Activated T-helper 1 cell treated with anti-CD3 and anti-CD28 coated beads, Interleukin-12 subunit alpha, Interleukin-12 subunit beta, Interleukin-2, Interleukin-4 antibody, amounts not matched to agents 30 ng/mL and 10 ng/mL and 1 ng/mL, durations not matched to agents 14 hours and 24 hours and 36 hours (primary cell): ENCODE measurements at regions of chr2 and their contacts with region 1.

Region 1: GRCh38 chr2:174835797-174836255 is 71.6 kb upstream of the CHRNA1 start:
- DNase-seq: no peak
- H3K4me3 Mint-ChIP-seq: peak overlapping the region; percentile 43
- H3K27ac Mint-ChIP-seq: peak overlapping the region; percentile 96
- H3K4me1 Mint-ChIP-seq: peaks cover 40% of the 10 kb centered on the region
- H3K27me3 Mint-ChIP-seq: no peaks in the 10 kb centered on the region

Region 2: GRCh38 chr2:174593574-174594203 is 242.1 kb before region 1 on chr2:
- intact Hi-C with region 1: loop called (anchors 5 kb)
- DNase-seq: peak; percentile 69
- H3K4me3 Mint-ChIP-seq: peak overlapping the region; percentile 86
- H3K27ac Mint-ChIP-seq: peak overlapping the region; percentile 98
- H3K4me1 Mint-ChIP-seq: peaks cover 58% of the 10 kb centered on the region
- H3K27me3 Mint-ChIP-seq: no peaks in the 10 kb centered on the region

Region 3: GRCh38 chr2:174615871-174616436 is 219.9 kb before region 1 on chr2:
- intact Hi-C with region 1: no loop called
- DNase-seq: no peak
- H3K4me3 Mint-ChIP-seq: peak overlapping the region; percentile 60
- H3K27ac Mint-ChIP-seq: peak overlapping the region; percentile 94
- H3K4me1 Mint-ChIP-seq: peaks cover 92% of the 10 kb centered on the region
- H3K27me3 Mint-ChIP-seq: no peaks in the 10 kb centered on the region

Region 4: GRCh38 chr2:174797781-174798276 is 38.0 kb before region 1 on chr2:
- intact Hi-C with region 1: loop called (anchors 1 kb)
- DNase-seq: no peak
- H3K4me3 Mint-ChIP-seq: no peak overlapping the region
- H3K27ac Mint-ChIP-seq: no peak overlapping the region
- H3K4me1 Mint-ChIP-seq: peaks cover 24% of the 10 kb centered on the region
- H3K27me3 Mint-ChIP-seq: peaks cover 5% of the 10 kb centered on the region

Region 5: DNA sequence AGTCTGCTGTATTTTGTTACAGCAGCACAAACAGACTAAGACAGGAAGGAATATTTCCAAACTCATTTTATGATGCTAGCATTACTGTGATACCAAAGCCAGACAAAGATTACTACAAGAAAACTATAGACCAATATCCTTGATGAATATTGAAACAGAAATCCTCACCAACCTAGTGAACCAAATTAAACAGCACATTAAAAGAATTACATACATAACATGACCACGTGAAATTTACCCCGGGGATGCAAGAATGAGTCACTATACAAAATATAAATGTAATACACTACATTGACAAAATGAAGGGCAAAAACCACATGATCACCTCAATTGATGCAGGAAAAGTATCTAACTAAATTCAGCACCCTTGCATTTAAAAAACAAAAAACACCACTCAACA is 56.7 kb after region 1 on chr2:
- intact Hi-C with region 1: loop called (anchors 2 kb)
- DNase-seq: no peak
- H3K4me3 Mint-ChIP-seq: no peak overlapping the region
- H3K27ac Mint-ChIP-seq: no peak overlapping the region
- H3K4me1 Mint-ChIP-seq: peaks cover 6% of the 10 kb centered on the region
- H3K27me3 Mint-ChIP-seq: peaks cover 2% of the 10 kb centered on the region

Region 6: GRCh38 chr2:175227393-175227792 is 391.6 kb after region 1 on chr2:
- intact Hi-C with region 1: loop called (anchors 1 kb)
- DNase-seq: no peak
- H3K4me3 Mint-ChIP-seq: peak overlapping the region; percentile 3
- H3K27ac Mint-ChIP-seq: peak overlapping the region; percentile 80
- H3K4me1 Mint-ChIP-seq: peaks cover 26% of the 10 kb centered on the region
- H3K27me3 Mint-ChIP-seq: peaks cover 19% of the 10 kb centered on the region